Activated CD4-positive, alpha-beta T cell treated with anti-CD3 and anti-CD28 coated beads, Interleukin-2, amount 10 ng/mL, durations not matched to agents 24 days and 14 days (primary cell): ENCODE measurements at regions of chr2 and their contacts with region 1.

Region 1: GRCh38 chr2:37623971-37624900 is 47.2 kb downstream of the CDC42EP3 start:
- DNase-seq: no peak
- H3K4me3 Mint-ChIP-seq: peak overlapping the region; percentile 49
- H3K27ac Mint-ChIP-seq: peak overlapping the region; percentile 71
- H3K4me1 Mint-ChIP-seq: peaks cover 34% of the 10 kb centered on the region
- H3K27me3 Mint-ChIP-seq: peaks cover 5% of the 10 kb centered on the region

Region 2: GRCh38 chr2:37570773-37571586 is 53.3 kb before region 1 on chr2:
- intact Hi-C with region 1: no loop called
- DNase-seq: no peak
- H3K4me3 Mint-ChIP-seq: no peak overlapping the region
- H3K27ac Mint-ChIP-seq: no peak overlapping the region
- H3K4me1 Mint-ChIP-seq: peaks cover 23% of the 10 kb centered on the region
- H3K27me3 Mint-ChIP-seq: peaks cover 16% of the 10 kb centered on the region

Region 3: GRCh38 chr2:37600735-37601134 is 23.5 kb before region 1 on chr2:
- intact Hi-C with region 1: loop called (anchors 2 kb)
- DNase-seq: no peak
- H3K4me3 Mint-ChIP-seq: peak overlapping the region; percentile 61
- H3K27ac Mint-ChIP-seq: no peak overlapping the region
- H3K4me1 Mint-ChIP-seq: peaks cover 43% of the 10 kb centered on the region
- H3K27me3 Mint-ChIP-seq: peaks cover 7% of the 10 kb centered on the region

Region 4: DNA sequence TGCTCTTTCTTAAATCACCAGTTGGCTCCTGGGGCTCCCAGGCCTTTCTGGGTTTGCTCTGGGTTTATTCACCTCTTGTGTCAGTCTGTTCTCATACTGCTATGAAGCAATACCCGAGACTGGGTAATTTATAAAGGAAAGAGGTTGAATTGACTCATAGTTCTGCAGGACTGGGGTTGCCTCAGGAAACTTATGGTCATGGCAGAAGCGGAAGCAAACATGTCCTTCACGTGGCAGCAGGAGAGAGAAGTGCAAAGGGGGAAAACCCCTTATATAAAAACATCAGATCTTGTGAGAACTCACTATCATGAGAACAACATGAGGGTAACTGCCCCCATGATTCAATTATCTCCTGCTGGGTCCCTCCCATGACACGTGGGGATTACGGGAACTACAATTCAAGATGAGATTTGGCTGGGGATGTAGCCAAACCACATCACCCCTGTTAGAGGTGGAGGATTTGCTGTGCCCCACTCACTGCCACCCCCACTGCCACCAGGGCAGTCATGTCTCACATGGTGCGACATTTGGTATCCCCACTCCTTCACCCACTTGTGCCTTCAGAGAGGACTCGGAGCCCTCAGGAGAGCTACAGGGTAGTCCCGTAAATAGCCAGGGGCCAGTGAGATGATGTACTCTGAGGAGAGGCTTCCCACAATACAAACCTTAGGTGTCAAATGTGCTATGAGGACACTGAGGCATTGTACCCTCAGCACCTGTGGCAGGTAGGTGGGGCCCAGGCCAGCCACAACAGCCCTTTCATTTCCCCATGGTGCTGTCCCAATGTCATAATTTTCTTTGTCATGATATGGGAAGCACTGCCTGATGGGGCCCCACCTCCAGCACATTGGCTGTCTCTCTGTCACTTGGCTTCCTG is 11.5 kb after region 1 on chr2:
- intact Hi-C with region 1: loop called (anchors 1 kb)
- DNase-seq: peak; percentile 89
- H3K4me3 Mint-ChIP-seq: peak overlapping the region; percentile 46
- H3K27ac Mint-ChIP-seq: peak overlapping the region; percentile 83
- H3K4me1 Mint-ChIP-seq: peaks cover 31% of the 10 kb centered on the region
- H3K27me3 Mint-ChIP-seq: peaks cover 13% of the 10 kb centered on the region